ENCODE measurements at regions of chr15 and their contacts with region 1.

Region 1: GRCh38 chr15:90886041-90886614 is 1.8 kb downstream of the FES start:
- DNase-seq: peak; percentile 92

Region 2: DNA sequence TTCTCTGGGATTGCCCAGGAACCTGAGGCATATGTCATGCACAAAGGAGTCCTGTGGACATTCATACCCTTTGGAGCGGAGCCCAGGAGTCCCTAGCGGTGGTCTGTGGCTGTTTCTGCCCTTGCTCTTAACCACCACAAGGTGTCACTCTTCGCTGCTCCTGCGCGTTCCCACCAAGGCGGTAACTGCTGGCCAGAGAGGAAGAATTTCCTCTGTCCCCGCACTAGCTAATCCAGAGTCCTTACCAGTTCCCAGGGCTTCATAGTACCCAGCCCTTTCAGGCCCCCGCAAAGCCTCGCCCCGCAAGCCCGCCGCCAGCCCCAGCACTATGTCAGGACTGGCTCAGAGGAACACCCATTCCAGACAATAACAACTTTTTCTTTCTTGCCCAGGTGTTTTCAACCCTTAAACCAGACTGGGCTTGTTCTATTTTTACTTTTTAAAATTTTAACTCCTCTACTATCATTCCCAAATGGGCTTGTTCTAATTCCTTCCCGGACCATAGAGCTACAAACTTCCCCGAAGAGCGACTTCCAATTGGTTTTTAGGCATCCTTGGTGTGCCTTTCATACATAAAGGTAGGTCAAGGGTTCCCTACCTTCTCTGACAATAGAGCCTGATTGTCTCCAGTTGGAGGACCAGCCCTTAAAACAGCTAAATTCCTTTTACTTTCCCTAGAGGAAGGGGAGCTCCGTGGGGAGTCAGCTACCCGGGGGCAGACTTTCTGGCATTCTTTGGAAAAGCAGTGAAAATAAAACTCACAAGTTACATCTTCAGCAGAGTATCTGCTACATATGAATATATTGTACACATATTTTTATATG is 565.9 kb before region 1 on chr15:
- intact Hi-C with region 1: loop called (anchors 5 kb)
- DNase-seq: peak; percentile 91

Region 3: GRCh38 chr15:90497912-90498311 is 388.2 kb before region 1 on chr15:
- intact Hi-C with region 1: loop called (anchors 10 kb)
- DNase-seq: no peak

Region 4: DNA sequence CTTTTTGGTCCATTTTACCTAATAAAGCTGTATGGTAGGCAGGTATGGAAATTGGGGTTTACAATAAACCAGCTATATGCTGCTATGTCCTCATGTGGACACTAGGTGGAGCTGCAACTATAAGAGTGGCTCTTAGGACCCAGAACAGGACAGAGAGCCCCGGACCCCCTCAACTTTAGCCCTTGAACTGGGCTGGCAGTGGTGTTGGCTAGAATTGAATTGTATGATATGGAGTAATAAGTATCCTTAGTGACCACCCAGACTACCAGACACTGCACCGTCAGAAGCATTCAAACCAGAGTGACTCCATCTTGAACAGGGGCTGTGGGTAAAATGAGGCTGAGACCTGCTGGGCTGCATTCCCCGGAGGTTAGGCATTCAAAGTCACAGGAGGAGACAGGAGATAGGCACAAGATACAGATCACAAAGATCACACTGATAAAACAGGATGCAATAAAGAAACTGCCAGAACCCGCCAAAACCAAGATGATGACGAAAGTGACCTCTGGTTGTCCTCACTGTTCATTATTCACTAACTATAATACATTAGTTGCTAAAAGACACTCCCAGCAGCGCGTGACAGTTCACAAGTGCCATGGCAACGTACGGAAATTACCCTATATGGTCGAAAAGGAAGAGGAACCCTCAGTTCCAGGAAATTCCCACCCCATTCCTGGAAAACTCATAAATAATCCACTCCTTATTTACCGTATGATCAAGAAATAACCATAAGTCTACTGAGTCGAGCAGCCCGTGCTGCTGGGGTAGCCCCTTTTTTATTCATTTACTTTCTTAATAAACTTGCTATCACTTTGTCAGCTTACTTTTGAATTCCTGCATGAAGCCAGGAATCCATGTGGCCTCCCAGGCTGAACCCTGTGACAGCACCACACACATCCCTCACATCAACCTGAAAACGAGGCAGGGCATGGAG is 237.7 kb before region 1 on chr15:
- intact Hi-C with region 1: loop called (anchors 1 kb)
- DNase-seq: peak; percentile 85

Region 5: DNA sequence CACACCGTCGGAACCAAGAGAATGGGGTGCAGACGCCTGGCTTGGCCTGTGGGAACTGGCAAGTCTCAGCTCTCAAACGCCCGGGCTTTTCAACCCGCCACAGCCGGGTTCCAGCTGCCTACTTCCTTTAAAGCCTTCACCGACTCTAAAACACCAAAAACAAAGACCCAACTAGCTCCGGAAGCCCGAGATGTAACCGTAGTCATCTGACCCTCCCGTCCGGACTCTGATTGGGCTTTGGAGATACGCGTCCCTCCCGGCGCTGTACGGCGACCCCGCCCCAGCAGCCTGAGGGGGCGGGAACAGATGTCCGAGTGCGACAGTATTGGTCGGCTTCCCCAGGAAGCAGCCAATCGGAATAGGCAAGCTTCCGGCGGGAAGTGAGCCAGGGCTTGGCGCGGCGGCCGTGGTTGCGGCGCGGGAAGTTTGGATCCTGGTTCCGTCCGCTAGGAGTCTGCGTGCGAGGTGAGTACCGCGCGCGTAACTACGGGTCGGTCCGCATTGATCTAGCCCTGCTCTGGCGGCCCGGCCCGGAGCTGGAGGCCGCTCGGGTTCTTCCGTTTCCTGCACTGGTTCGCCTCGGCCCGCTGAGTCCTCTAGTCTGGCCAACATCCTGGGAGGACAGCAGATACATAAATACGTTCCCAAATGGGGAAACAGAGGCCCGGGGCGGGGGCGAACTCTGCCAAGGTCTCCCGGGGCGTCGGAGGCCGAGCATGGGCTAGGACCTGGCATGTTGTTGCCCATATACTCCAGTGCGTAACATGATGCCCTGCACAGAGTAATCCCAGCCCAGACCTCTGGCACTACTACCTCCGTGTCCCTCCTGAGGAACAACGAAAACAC is 168.9 kb before region 1 on chr15 and contains the start of gene BLM:
- intact Hi-C with region 1: loop called (anchors 5 kb)
- DNase-seq: peak; percentile 99
- total RNA-seq, gene BLM: 0.75 TPM

Region 6: GRCh38 chr15:90818251-90819210 is 67.6 kb before region 1 on chr15:
- intact Hi-C with region 1: no loop called
- DNase-seq: no peak

Region 7: DNA sequence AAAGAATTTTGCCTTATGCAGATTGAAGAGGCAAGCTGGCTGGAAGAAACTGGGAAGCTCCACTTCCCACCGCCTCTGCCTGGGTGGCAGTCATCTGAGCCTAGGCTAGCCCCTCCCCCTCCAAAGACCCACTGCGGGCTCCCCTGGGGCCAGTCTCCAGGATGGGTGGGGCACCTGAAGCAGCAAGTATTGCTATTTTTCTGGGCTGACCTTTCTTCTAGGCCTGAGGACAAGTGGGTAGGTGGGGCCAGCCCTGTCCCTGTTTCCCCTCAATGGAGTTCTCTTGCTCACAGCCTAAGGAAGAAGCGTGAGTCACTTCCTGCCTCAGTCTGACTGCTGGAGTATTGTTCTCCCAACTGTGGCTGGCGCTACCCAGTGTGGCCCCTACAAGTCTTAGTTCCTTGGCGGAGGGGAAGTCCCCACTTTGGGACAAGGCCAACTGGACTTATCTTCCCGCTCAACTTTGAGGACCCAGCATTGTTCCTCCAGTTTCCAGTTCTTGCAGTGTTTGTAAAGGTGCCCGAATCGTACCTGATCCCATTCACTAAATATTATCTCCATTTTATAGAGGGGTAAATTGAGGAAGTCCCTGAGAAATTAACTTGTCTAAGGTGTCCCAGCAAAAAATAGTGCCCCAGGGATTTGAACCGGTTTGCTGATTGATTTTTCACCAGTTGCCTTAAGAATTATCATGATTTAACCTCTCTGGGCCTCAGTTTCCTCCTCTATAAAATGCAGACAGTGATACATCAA is 16.4 kb before region 1 on chr15:
- intact Hi-C with region 1: loop called (anchors 1 kb)
- DNase-seq: peak; percentile 91

Measured in cardiac septum (tissue), 1 donor.